ENCODE measurements at regions of chr3 and their contacts with region 1.

Region 1: GRCh38 chr3:138915503-138916498 is 31.1 kb downstream of the FOXL2 start:
- DNase-seq: peak; percentile 96
- ATAC-seq: peak; percentile 99

Region 2: DNA sequence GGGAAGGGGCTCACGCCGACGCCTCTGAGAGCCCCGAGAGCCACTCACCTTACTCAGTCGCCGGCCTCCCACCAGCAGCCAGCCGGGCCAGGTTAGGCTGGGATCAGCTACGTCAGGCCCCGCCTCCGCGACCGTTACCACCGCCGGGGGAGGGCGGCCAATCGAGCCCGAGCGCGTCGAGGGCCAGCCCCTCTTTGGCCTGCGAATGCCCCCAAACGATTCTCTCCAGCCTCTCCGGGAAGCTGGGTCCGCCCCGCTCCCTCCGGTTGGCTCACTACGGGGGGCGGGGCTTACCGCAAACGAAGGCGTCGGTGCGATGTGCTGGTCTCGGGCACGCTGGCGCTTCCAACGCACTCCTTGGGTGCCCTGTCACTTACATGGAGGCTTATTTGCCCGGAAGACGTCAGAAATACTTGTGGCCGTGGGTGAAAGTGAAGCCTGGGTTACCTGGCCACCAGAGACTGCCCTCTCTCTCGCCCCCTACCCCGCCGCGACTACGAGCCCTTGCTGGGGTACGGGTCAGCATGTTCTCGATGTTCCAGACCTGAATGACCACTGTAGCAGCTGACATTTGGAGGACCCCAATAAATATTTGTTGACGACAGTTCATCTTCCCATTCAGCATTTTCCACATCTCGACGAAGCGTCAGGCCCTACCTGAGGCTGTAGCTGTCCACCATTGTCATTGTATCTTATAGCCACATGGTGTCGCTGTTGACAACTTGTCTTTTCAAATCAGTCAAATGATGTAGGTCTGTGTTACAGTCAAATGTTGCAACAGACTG is 321.5 kb before region 1 on chr3 and contains the start of gene CEP70:
- intact Hi-C with region 1: loop called (anchors 5 kb)
- DNase-seq: peak; percentile 95
- ATAC-seq: peak; percentile 99
- total RNA-seq, gene CEP70: 41.0 TPM

Region 3: DNA sequence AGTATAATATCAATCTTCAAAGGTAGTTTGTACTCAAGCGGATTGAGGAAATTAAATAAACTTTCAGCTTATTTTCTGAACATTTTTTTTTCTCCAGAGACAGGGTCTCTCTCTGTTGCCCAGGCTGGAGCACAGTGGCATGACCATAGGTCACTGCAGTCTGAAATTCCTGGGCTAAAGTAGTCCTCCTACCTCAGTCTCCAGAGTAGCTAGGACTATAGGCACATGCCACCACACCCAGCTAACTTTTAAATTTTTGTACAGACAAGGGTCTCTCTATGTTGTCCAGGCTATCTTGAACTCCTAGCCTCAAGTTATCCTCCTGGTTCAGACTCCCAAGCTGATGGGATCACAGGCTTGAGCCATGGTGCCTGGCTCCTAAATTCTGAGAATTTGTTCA is 210.1 kb before region 1 on chr3:
- intact Hi-C with region 1: loop called (anchors 10 kb)
- DNase-seq: no peak
- ATAC-seq: no peak

Region 4: DNA sequence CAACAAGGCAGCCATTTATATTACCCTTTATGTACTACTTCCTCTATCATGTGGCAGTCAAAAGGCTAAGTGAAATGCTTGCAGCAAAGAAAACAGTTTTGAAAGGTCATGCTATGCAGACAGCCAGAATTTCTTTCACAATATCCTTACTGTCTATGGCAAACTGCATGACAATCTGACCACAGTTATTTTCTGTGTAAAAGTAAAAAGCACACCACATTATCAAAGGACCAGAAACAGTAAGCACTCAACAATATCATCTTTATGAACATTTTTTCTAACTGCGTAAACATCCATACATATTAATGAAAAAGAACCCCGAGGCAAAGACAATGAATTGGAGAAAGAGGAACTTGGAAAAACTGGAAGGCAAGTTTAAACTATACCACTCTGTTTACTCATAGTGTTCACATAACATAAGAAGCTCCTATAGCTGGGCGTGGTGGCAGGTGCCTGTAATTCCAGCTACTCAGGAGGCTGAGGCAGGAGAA is 129.0 kb before region 1 on chr3:
- intact Hi-C with region 1: no loop called
- DNase-seq: no peak
- ATAC-seq: peak; percentile 80

Region 5: GRCh38 chr3:138946181-138947059 is 30.6 kb after region 1 on chr3:
- intact Hi-C with region 1: no loop called
- DNase-seq: no peak
- ATAC-seq: no peak